ENCODE measurements at regions of chr18 and their contacts with region 1.

Region 1: DNA sequence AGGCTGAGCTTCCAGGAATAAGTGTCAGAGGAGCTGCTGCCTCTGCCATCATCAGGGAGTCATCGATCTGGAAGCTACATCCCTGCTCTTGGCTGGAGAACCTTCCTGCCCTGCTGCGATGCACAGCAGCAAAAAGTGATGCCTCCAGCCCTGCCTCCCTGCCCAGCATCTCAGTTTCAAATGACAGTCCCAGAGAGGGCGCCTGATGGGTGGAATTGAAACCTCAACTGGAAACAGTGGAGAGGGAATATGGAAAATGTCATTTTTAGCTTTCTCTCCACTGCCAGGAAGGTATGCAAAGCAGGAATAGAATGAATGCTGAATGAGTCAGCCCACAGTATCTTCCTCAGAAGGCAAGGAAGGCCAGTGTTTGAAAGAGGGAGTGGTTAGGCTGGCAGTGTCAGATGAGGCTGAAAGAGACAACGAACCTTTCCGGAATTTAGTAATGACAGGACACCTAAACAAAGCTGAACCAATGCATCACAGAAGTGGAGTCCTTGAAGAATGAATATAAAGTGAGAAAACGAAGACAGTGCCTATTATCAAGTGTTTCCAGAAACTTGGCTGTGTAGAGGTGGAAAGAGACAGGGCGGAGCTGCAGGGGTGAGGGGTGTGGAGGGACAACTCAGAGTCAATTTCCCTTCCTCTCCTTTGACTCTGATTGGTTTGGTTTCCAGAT is 153.9 kb upstream of the NDUFV2 start:
- DNase-seq: peak; percentile 81
- H3K4me3 ChIP-seq: peak overlapping the region; percentile 20
- H3K27me3 ChIP-seq: no peaks in the 10 kb centered on the region
- CTCF ChIP-seq: 0 out of 2 replicates have a peak, but pooled peaks have one; percentile 5

Region 2: DNA sequence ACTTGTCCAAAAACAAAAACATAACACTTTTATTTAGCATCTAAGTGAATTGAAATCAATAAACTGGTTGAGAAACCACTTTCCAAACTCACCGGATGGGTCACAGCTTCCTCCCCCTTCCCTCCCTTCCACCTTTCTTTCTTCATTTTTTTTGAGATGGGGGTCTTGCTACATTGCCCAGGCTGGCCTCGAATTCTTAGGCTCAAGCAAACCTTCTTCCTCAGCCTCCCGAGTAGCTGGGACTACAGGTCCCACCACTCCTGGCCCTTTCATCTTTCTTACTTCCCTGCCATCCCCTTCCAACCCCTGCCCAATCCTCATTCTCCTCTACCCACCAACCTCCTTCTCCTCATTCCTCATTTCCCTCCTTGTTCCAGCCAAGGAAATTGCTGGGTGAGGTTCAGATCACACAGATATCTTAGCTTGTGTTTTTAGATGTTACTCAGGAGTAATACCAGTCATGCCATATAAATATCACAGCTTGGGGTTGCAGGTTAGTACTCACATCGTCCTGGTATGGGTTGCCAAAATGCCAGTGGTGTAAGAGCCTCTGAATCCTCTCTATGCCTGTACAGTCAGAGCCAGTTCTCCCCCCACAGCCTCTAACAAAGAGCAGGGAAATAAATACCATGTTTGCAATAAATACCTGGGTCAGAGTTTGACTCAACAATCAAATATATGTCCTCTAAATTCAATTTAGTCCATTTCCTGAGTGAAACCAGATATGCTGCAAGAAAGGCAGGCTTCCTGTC is 21.2 kb after region 1 on chr18:
- CTCF ChIA-PET with region 1: interaction called, 14 read pairs
- POLR2A ChIA-PET with region 1: interaction called, 3 read pairs
- DNase-seq: peak; percentile 60
- H3K4me3 ChIP-seq: no peak overlapping the region
- H3K27me3 ChIP-seq: no peaks in the 10 kb centered on the region
- CTCF ChIP-seq: no peak

Region 3: GRCh38 chr18:9160014-9160413 is 211.4 kb after region 1 on chr18:
- CTCF ChIA-PET with region 1: no interaction called
- POLR2A ChIA-PET with region 1: no interaction called
- DNase-seq: no peak
- H3K4me3 ChIP-seq: no peak overlapping the region
- H3K27me3 ChIP-seq: no peaks in the 10 kb centered on the region
- CTCF ChIP-seq: no peak